ENCODE measurements at regions of chr19 and their contacts with region 1.

Region 1: GRCh38 chr19:7535035-7535992 is at the start of gene PNPLA6:
- DNase-seq: peak; percentile 97
- H3K4me3 ChIP-seq: peak within 1 kb of the TSS; percentile 73
- H3K27ac ChIP-seq: peak within 1 kb of the TSS; percentile 87
- H3K4me1 ChIP-seq: no peaks in the 10 kb centered on the region
- H3K27me3 ChIP-seq: no peaks in the 10 kb centered on the region
- CTCF ChIP-seq: no peak
- total RNA-seq, gene PNPLA6: 70.4 and 73.9 TPM in 2 replicates

Region 2: DNA sequence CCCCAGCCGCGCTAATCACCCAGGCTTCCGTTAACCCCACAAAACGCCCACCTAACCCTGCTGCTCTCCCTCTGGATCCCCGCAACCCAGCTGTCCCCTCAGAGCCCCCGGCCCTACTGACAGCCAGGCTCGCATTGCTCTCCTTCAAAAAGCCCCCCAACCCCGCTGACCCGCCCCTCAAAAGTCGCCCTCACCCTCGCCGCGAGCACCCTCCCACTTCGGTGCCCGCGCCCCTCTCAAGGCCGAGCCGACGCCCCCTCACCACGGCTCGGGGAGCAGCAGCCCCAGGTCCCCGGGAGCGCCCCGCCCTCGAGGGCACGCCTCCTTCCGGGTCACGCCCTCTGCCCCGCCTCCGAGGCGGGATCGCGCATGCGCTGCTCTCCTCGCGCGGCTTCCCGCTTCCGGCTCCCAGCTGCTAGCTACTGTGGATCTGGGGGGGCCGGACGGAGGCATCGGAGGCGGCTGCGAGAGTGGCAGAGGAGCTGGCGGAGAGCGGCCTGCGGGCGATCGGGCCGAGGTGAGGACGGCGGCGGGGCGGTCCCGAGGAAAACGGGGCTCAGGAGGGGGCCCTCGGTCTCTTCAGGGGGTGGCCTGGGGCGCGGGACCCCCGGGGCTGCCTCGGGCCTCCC is 140.5 kb before region 1 on chr19:
- CTCF ChIA-PET with region 1: no interaction called
- POLR2A ChIA-PET with region 1: no interaction called
- intact Hi-C with region 1: loop called (anchors 10 kb)
- DNase-seq: peak; percentile 89
- H3K4me3 ChIP-seq: peak overlapping the region; percentile 96
- H3K27ac ChIP-seq: peak overlapping the region; percentile 82
- H3K4me1 ChIP-seq: peaks cover 6% of the 10 kb centered on the region
- H3K27me3 ChIP-seq: no peaks in the 10 kb centered on the region
- CTCF ChIP-seq: 0 out of 2 replicates have a peak, but pooled peaks have one; percentile 25

Region 3: GRCh38 chr19:7417671-7418324 is 117.5 kb before region 1 on chr19:
- CTCF ChIA-PET with region 1: no interaction called
- POLR2A ChIA-PET with region 1: no interaction called
- intact Hi-C with region 1: no loop called
- DNase-seq: no peak
- H3K4me3 ChIP-seq: no peak overlapping the region
- H3K27ac ChIP-seq: no peak overlapping the region
- H3K4me1 ChIP-seq: no peaks in the 10 kb centered on the region
- H3K27me3 ChIP-seq: no peaks in the 10 kb centered on the region
- CTCF ChIP-seq: no peak